ENCODE measurements at regions of chr20 and their contacts with region 1.

Region 1: GRCh38 chr20:51639206-51639832 is 96.8 kb upstream of the NFATC2 start:
- DNase-seq: peak; percentile 46 to 66 (median 52)
- H3K4me3 ChIP-seq: no peak overlapping the region
- H3K4me3 Mint-ChIP-seq: no peak overlapping the region
- H3K27ac ChIP-seq: no peak overlapping the region
- H3K27ac Mint-ChIP-seq: peak overlapping the region in 4 of 7 donors; percentile 13 to 82 (median 46)
- H3K4me1 ChIP-seq: no peaks in the 10 kb centered on the region
- H3K4me1 Mint-ChIP-seq: peaks cover 4% of the 10 kb centered on the region
- H3K27me3 ChIP-seq: no peaks in the 10 kb centered on the region
- H3K27me3 Mint-ChIP-seq: peaks cover 1 to 8% (median 3%) of the 10 kb centered on the region in 3 donors
- CTCF ChIP-seq: peak; percentile 94

Region 2: GRCh38 chr20:51600016-51600420 is 39.3 kb before region 1 on chr20:
- intact Hi-C with region 1: no loop called
- DNase-seq: no peak
- H3K4me3 ChIP-seq: no peak overlapping the region
- H3K4me3 Mint-ChIP-seq: no peak overlapping the region
- H3K27ac ChIP-seq: no peak overlapping the region
- H3K27ac Mint-ChIP-seq: no peak overlapping the region
- H3K4me1 ChIP-seq: peaks cover 4 to 6% of the 10 kb centered on the region in 2 donors
- H3K4me1 Mint-ChIP-seq: peaks cover 9% of the 10 kb centered on the region
- H3K27me3 ChIP-seq: no peaks in the 10 kb centered on the region
- H3K27me3 Mint-ChIP-seq: peaks cover 0 to 12% (median 4%) of the 10 kb centered on the region in 3 donors
- CTCF ChIP-seq: no peak

Region 3: DNA sequence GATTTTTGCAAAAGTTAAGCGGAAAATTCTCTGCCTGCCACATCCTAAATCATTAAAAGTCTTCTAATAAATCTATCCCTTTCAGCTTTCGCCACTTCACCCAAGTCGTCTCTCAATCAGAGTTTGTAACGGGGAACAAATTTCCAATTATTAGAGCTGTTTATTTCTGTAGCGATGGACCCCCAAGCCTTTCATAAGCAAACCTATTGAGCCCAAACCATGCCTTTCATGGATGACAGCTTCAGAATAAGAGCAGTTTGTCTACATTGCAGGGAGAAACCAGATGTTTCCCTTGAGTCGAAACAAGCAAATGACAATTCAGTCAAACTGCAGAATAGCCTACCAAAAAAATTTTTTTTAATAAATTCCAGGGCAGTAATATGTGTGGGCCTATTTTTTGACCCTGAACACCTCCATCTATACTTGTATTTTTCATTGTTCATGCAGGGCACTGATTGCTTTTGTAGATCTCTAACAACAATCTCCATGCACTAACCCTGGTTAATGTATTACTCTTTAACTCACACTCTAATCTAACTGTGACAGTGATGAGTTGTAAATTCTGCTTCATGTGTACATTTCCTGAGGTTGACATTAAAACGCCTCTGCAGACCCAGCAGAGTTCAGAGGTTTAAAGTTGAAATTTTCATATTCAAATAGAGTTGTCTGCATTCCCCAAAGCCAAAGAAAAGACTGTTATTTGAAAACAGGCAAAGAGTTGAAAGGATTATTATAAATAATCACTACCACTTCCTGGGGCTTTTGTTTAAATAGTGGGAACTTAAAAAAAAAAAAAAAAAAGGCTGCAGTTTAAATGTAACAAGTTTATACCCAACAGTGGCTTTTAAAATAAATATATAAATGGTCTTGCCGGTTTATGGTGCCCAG is 64.3 kb after region 1 on chr20:
- intact Hi-C with region 1: loop called in 1 of 2 experiments (anchors 5 kb)
- DNase-seq: no peak
- H3K4me3 ChIP-seq: no peak overlapping the region
- H3K4me3 Mint-ChIP-seq: no peak overlapping the region
- H3K27ac ChIP-seq: no peak overlapping the region
- H3K27ac Mint-ChIP-seq: no peak overlapping the region
- H3K4me1 ChIP-seq: no peaks in the 10 kb centered on the region
- H3K4me1 Mint-ChIP-seq: peaks cover 9% of the 10 kb centered on the region
- H3K27me3 ChIP-seq: no peaks in the 10 kb centered on the region
- H3K27me3 Mint-ChIP-seq: peaks cover 1 to 2% (median 2%) of the 10 kb centered on the region in 3 donors
- CTCF ChIP-seq: no peak